Activated CD4-positive, alpha-beta T cell treated with anti-CD3 and anti-CD28 coated beads for 36 hours (primary cell): ENCODE measurements at regions of chr12 and their contacts with region 1.

Region 1: DNA sequence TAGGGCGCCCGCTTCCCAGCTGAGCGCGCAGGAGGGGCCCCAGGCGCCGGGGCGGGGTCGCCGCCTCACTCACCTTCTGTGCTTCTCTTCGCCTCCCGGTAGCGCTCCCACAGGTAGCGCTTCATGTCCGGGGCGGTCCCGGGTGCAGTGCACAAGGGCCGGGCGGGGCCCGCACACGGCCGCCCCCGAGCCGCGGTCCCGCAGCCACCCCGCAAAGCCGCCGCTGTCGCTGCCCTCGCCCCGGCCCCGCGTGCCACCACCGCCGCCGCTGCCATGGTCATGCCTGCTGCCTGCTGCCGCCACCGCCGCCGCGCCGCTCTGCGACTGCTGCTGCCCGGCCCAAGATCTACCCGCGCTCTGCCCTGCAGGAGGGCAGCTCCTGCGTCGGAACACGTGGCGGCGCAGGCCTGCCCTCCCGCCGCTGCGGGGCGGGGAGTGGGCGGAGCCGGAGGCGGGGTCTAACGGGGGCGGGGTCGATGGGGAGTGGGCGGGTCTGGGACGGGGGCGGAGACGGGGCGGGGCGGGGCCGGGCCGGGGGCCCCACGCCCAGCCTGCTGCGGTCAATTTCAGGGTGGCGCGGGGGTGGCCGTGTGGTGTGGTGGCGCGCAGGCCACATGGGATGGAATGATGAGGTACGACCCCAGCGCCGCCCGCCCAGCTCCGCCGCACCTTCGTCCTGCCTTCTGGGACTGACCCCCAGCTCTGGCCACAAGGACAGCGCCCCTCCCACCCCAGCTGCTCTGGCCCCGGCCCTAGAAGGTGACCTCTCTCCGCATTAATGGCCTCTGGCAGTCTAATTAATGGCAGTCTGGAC is at the start of gene NT5DC3:
- DNase-seq: peak; percentile 91
- ATAC-seq: peak; percentile 88
- H3K4me3 Mint-ChIP-seq: peak within 1 kb of the TSS; percentile 77
- H3K27ac Mint-ChIP-seq: peak within 1 kb of the TSS; percentile 63
- H3K4me1 Mint-ChIP-seq: peaks cover 22% of the 10 kb centered on the region
- H3K27me3 Mint-ChIP-seq: no peaks in the 10 kb centered on the region
- total RNA-seq, gene NT5DC3: 7.3 to 8.9 TPM

Region 2: DNA sequence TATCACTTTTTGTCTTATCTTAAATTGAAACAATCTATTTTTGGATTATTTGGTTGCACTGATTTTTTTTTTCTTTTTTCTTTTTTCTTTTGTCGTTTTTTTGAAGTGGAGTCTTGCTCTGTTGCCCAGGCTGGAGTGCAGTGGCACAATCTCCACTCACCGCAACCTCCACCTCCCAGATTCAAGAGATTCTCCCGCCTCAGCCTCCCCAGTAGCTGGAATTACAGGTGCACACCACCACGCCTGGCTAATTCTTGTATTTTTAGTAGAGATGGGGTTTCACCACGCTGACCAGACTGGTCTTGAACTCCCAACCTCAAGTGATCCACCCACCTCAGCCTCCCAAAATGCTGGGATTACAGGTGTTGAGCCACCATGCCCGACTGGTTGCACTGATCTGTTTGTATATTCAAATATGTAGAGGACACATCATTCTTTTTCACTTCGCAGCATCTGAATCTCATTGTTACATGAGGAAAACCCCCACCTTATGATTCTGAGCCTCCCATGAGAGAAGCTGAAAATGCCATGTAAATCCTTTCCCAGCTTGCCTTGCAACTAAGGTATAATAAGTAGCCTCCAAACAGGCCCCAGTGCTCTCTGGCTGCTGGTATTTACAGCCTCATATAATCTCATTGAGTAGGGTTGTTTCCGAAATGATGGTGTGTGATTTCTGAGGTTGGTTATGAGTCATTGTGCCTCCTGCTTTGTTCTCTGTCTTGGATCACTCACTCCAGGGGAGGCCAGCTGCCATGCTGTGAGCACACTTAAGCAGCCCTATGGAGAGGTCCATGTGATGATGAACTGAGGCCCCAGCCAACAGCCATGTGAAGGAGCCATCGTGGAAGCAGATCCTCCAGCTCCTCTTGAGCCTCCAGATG is 83.9 kb after region 1 on chr12:
- CTCF ChIA-PET with region 1: no interaction called
- POLR2A ChIA-PET with region 1: no interaction called
- intact Hi-C with region 1: loop called (anchors 1 to 2 kb)
- DNase-seq: peak; percentile 80
- ATAC-seq: peak; percentile 53
- H3K4me3 Mint-ChIP-seq: peak overlapping the region; percentile 63
- H3K27ac Mint-ChIP-seq: peak overlapping the region; percentile 87
- H3K4me1 Mint-ChIP-seq: peaks cover 36% of the 10 kb centered on the region
- H3K27me3 Mint-ChIP-seq: no peaks in the 10 kb centered on the region

Region 3: GRCh38 chr12:103956516-103957027 is 115.5 kb after region 1 on chr12:
- CTCF ChIA-PET with region 1: no interaction called
- POLR2A ChIA-PET with region 1: no interaction called
- intact Hi-C with region 1: loop called in 1 of 2 experiments (anchors 2 kb)
- DNase-seq: no peak
- ATAC-seq: peak; percentile 0
- H3K4me3 Mint-ChIP-seq: peak overlapping the region; percentile 95
- H3K27ac Mint-ChIP-seq: peak overlapping the region; percentile 94
- H3K4me1 Mint-ChIP-seq: peaks cover 45% of the 10 kb centered on the region
- H3K27me3 Mint-ChIP-seq: no peaks in the 10 kb centered on the region

Region 4: DNA sequence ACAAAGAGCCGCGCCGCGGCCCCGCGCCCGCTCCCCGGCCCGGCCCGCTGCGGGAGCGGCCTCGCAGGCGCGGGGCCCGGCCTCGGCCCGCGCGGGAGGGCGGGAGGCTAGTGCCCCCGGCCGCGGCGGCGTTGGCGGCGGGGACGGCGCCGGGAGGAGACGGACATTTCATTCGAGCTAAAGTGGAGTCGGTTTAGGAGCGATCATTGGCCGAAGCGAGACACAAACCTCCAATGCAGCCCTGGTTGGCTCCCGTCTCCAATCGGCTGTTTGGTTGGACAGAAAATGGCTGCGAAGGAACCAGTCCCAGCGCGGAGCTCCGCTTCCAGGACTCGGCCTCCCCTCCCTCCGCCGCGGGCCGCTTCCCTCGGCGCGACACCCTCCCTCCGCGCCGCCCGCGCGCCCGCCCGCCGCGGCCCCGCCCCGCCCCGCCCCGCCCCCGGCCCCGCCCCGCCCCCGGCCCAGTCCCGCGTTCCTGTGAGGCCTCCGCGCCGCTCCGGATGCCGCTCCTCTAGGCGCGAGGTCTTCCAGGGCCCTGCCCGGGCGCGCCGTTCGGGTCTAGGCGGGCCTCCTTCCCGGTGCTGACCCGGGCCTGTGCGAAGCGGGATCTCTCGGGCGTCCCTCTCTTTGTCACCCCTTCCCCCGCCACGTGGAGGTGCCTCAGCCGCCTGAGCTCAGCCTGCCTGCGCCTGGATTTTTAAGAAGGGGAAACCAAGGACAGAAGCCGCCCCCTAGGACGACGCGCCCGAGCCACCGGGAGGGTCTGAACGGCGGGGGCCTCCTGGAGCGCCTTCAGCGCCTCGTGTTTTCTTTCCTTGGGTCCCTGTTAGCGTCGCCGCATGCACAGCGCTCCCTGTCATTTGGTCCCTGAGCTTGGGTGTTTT is 297.1 kb after region 1 on chr12 and contains the start of gene NFYB:
- CTCF ChIA-PET with region 1: no interaction called
- POLR2A ChIA-PET with region 1: interaction called, 4 read pairs
- intact Hi-C with region 1: loop called in 1 of 2 experiments (anchors 1 kb)
- DNase-seq: peak; percentile 95
- ATAC-seq: peak; percentile 98
- H3K4me3 Mint-ChIP-seq: peak within 1 kb of the TSS; percentile 83
- H3K27ac Mint-ChIP-seq: peak within 1 kb of the TSS; percentile 90
- H3K4me1 Mint-ChIP-seq: peaks cover 19% of the 10 kb centered on the region
- H3K27me3 Mint-ChIP-seq: no peaks in the 10 kb centered on the region
- total RNA-seq, gene NFYB: 18.8 to 27.2 TPM

Region 5: DNA sequence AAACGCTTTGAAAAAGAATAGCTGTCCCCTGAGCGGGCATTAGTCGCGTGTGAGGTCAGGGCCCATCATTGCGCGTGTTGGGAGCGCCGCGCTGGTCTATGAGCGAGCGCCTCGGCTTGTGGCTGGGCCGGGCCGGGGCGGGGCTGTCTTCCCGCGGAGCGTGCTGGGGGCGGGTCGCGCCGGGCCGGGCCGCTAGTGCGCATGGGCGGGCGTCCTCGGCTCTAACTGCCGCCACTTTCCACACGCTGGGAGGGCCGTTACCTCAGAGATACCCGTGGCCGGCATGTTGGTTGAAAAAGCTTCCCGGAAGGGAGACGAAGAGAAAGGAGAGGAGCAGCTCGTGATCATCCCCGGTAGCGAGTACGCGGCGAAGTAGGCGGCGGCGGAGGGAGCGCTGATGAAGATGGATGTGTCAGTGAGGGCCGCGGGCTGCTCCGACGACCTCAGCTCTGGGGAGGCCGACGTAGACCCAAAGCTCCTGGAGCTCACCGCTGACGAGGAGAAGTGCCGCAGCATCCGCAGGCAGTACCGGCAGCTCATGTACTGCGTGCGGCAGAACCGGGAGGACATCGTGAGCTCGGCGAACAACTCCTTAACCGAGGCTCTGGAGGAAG is 462.6 kb after region 1 on chr12 and contains the start of gene EID3:
- CTCF ChIA-PET with region 1: no interaction called
- POLR2A ChIA-PET with region 1: no interaction called
- intact Hi-C with region 1: loop called in 1 of 2 experiments (anchors 2 kb)
- DNase-seq: peak; percentile 95
- ATAC-seq: peak; percentile 97
- H3K4me3 Mint-ChIP-seq: peak within 1 kb of the TSS; percentile 81
- H3K27ac Mint-ChIP-seq: peak within 1 kb of the TSS; percentile 96
- H3K4me1 Mint-ChIP-seq: peaks cover 57% of the 10 kb centered on the region
- H3K27me3 Mint-ChIP-seq: no peaks in the 10 kb centered on the region
- total RNA-seq, gene EID3: 3.9 to 4.6 TPM

Region 6: GRCh38 chr12:105235732-105236476 is 1394.8 kb after region 1 on chr12 and contains the start of gene APPL2:
- CTCF ChIA-PET with region 1: no interaction called
- POLR2A ChIA-PET with region 1: no interaction called
- intact Hi-C with region 1: loop called in 1 of 2 experiments (anchors 5 kb)
- DNase-seq: peak; percentile 87
- ATAC-seq: peak; percentile 84
- H3K4me3 Mint-ChIP-seq: peak within 1 kb of the TSS; percentile 85
- H3K27ac Mint-ChIP-seq: peak within 1 kb of the TSS; percentile 86
- H3K4me1 Mint-ChIP-seq: peaks cover 41% of the 10 kb centered on the region
- H3K27me3 Mint-ChIP-seq: no peaks in the 10 kb centered on the region
- total RNA-seq, gene APPL2: 13.9 to 17.2 TPM